Right cardiac atrium (tissue), 5 donors: ENCODE measurements at regions of chr4 and their contacts with region 1.

Region 1: GRCh38 chr4:55116450-55116849 is 8.9 kb downstream of the KDR start:
- DNase-seq: no peak
- ATAC-seq: peak in 1 of 2 donors; percentile 41
- H3K4me3 ChIP-seq: no peak overlapping the region
- H3K27ac ChIP-seq: no peak overlapping the region
- H3K4me1 ChIP-seq: peaks cover 3% of the 10 kb centered on the region
- H3K27me3 ChIP-seq: no peaks in the 10 kb centered on the region

Region 2: GRCh38 chr4:55008166-55009070 is 108.0 kb before region 1 on chr4:
- intact Hi-C with region 1: loop called in 1 of 4 experiments (anchors 10 kb)
- DNase-seq: peak in 1 of 3 donors; percentile 12
- ATAC-seq: peak; percentile 41 to 71
- H3K4me3 ChIP-seq: no peak overlapping the region
- H3K27ac ChIP-seq: no peak overlapping the region
- H3K4me1 ChIP-seq: peaks cover 6% of the 10 kb centered on the region
- H3K27me3 ChIP-seq: no peaks in the 10 kb centered on the region